Aorta (tissue), 5 donors: ENCODE measurements at regions of chr3 and their contacts with region 1.

Region 1: DNA sequence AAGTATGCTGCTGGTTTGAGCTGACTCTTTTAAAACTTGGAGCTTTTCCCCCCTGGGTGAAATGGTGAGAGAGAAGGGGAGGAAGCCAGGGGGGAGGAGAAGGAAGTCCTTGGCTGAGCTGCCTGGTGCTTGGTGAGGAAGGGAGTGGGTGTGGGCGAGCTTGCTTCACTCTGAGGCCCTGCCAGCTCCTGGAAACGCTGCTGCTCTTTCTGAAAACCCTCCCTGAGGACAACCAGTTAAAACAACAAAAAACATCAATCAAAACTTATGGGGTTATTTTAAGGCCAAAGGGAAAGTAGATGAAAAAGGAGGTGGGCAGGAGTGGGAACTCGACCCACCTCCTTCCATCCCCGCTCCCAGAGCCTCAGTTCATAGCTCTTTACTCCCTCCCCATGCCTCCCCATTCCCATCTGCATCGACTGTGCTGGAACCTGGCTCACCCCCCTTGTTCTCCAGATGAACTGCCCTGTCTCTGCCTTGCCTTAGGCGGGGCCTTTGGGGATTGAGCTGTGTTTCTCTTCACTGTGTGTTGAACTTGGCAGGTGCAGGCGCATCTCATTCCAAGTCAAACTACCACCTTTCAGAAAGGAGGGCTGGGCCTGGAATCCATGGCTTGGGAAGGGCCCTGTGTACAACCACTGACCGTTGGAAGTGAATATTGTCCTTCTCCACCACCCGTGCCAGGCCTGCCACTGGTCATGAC is 166.1 kb downstream of the ZNF621 start:
- DNase-seq: peak; percentile 85 to 91
- ATAC-seq: peak; percentile 93
- H3K4me3 ChIP-seq: no peak overlapping the region
- H3K27ac ChIP-seq: peak overlapping the region in 1 of 2 donors; percentile 10
- H3K4me1 ChIP-seq: peaks cover 0 to 4% of the 10 kb centered on the region in 2 donors
- H3K27me3 ChIP-seq: no peaks in the 10 kb centered on the region

Region 2: GRCh38 chr3:40765884-40766283 is 75.0 kb after region 1 on chr3:
- intact Hi-C with region 1: loop called in 1 of 2 experiments (anchors 5 kb)
- DNase-seq: no peak
- ATAC-seq: peak; percentile 88
- H3K4me3 ChIP-seq: no peak overlapping the region
- H3K27ac ChIP-seq: peak overlapping the region in 1 of 2 donors; percentile 1
- H3K4me1 ChIP-seq: peaks cover 2 to 5% of the 10 kb centered on the region in 2 donors
- H3K27me3 ChIP-seq: no peaks in the 10 kb centered on the region

Region 3: GRCh38 chr3:40971191-40972168 is 280.6 kb after region 1 on chr3:
- intact Hi-C with region 1: loop called in 1 of 2 experiments (anchors 10 kb)
- DNase-seq: peak; percentile 80 to 82
- ATAC-seq: peak; percentile 92
- H3K4me3 ChIP-seq: no peak overlapping the region
- H3K27ac ChIP-seq: peak overlapping the region in 1 of 2 donors; percentile 12
- H3K4me1 ChIP-seq: no peaks in the 10 kb centered on the region
- H3K27me3 ChIP-seq: no peaks in the 10 kb centered on the region

Region 4: DNA sequence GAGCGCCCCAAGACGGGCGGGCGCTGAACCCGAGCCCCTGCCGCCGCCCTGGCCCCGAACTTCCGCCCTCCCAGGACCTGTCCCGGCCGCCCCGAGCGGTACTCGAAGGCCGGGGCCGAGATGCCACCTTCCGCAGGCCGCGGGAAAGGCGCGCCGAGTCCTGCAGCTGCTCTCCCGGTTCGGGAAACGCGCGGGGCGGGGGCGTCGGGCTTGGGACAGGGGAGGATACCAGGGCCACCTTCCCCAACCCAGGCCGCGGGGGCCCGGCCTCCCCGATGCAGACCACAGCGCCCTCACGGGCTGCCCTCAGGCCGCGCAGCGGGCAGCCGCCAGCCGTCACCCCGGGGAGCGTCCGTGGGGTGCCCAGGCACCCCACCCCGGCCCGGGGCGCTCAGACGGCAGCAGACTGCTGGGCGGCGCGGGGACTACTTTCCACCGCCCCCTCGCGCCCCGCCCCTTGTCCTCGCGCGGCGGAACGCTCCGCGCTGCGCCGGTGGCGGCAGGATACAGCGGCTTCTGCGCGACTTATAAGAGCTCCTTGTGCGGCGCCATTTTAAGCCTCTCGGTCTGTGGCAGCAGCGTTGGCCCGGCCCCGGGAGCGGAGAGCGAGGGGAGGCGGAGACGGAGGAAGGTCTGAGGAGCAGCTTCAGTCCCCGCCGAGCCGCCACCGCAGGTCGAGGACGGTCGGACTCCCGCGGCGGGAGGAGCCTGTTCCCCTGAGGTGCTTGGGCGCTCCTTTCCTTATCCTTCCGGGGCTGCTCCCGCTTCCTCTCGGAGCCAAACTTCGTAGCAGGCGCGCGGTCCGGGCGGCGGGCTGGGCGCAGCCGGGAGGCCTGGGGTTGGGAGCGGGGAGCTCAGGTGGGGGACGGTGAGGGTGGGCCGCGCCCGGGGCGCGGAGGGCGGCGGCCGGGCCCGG is 508.3 kb after region 1 on chr3 and contains the start of gene CTNNB1:
- intact Hi-C with region 1: loop called in 1 of 2 experiments (anchors 10 kb)
- DNase-seq: peak; percentile 95 to 97
- ATAC-seq: peak; percentile 96
- H3K4me3 ChIP-seq: peak within 1 kb of the TSS; percentile 50 to 98
- H3K27ac ChIP-seq: peak within 1 kb of the TSS; percentile 62 to 72
- H3K4me1 ChIP-seq: peaks cover 1 to 3% of the 10 kb centered on the region in 2 donors
- H3K27me3 ChIP-seq: no peaks in the 10 kb centered on the region
- total RNA-seq, gene CTNNB1: 306 to 336 TPM